Endothelial cell of umbilical vein (primary cell): ENCODE measurements at regions of chr1 and their contacts with region 1.

Region 1: GRCh38 chr1:81549604-81550127 is 251.1 kb upstream of the ADGRL2 start:
- DNase-seq: peak; percentile 77
- H3K4me3 ChIP-seq: no peak overlapping the region
- H3K27ac ChIP-seq: no peak overlapping the region
- H3K4me1 ChIP-seq: no peaks in the 10 kb centered on the region
- H3K27me3 ChIP-seq: no peaks in the 10 kb centered on the region
- CTCF ChIP-seq: peak; percentile 31 to 41
- POLR2A ChIP-seq: no peak

Region 2: DNA sequence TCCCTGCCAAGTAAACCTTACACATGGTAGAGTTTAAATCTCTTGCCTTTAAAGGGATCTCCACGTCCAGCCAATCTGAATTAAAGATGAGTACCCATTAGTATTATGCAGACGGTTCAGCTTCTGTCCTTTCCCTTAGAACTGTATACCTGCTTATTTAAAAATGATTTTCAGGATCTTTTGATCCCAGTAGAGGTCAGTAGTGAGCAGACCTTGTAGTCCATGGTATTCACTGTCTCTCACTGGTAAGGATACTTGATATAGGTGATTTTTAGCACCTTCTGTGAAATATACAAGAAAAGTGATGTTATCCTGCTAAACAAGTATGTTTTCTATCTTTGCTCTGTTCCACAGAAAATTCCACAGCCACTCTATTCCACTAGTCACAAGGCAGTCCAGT is 1331.6 kb before region 1 on chr1:
- CTCF ChIA-PET with region 1: interaction called, 4 read pairs
- POLR2A ChIA-PET with region 1: no interaction called
- dilution Hi-C with region 1: no loop called
- intact Hi-C with region 1: loop called (anchors 5 kb)
- DNase-seq: peak; percentile 51
- H3K4me3 ChIP-seq: no peak overlapping the region
- H3K27ac ChIP-seq: no peak overlapping the region
- H3K4me1 ChIP-seq: no peaks in the 10 kb centered on the region
- H3K27me3 ChIP-seq: no peaks in the 10 kb centered on the region
- CTCF ChIP-seq: peak; percentile 30 to 43
- POLR2A ChIP-seq: no peak

Region 3: GRCh38 chr1:80910426-80910825 is 639.2 kb before region 1 on chr1:
- CTCF ChIA-PET with region 1: no interaction called
- POLR2A ChIA-PET with region 1: no interaction called
- dilution Hi-C with region 1: no loop called
- intact Hi-C with region 1: no loop called
- DNase-seq: no peak
- H3K4me3 ChIP-seq: no peak overlapping the region
- H3K27ac ChIP-seq: no peak overlapping the region
- H3K4me1 ChIP-seq: no peaks in the 10 kb centered on the region
- H3K27me3 ChIP-seq: no peaks in the 10 kb centered on the region
- CTCF ChIP-seq: no peak
- POLR2A ChIP-seq: no peak

Region 4: GRCh38 chr1:81414488-81415015 is 135.1 kb before region 1 on chr1:
- CTCF ChIA-PET with region 1: interaction called, 7 read pairs
- POLR2A ChIA-PET with region 1: no interaction called
- dilution Hi-C with region 1: no loop called
- intact Hi-C with region 1: loop called (anchors 5 kb)
- DNase-seq: peak; percentile 66
- H3K4me3 ChIP-seq: no peak overlapping the region
- H3K27ac ChIP-seq: no peak overlapping the region
- H3K4me1 ChIP-seq: peaks cover 8% of the 10 kb centered on the region
- H3K27me3 ChIP-seq: no peaks in the 10 kb centered on the region
- CTCF ChIP-seq: peak; percentile 80
- POLR2A ChIP-seq: no peak

Region 5: GRCh38 chr1:81670286-81670685 is 120.6 kb after region 1 on chr1:
- CTCF ChIA-PET with region 1: interaction called, 6 read pairs
- POLR2A ChIA-PET with region 1: no interaction called
- dilution Hi-C with region 1: no loop called
- intact Hi-C with region 1: loop called (anchors 1 kb)
- DNase-seq: peak; percentile 98
- H3K4me3 ChIP-seq: no peak overlapping the region
- H3K27ac ChIP-seq: no peak overlapping the region
- H3K4me1 ChIP-seq: peaks cover 8% of the 10 kb centered on the region
- H3K27me3 ChIP-seq: no peaks in the 10 kb centered on the region
- CTCF ChIP-seq: no peak
- POLR2A ChIP-seq: no peak

Region 6: DNA sequence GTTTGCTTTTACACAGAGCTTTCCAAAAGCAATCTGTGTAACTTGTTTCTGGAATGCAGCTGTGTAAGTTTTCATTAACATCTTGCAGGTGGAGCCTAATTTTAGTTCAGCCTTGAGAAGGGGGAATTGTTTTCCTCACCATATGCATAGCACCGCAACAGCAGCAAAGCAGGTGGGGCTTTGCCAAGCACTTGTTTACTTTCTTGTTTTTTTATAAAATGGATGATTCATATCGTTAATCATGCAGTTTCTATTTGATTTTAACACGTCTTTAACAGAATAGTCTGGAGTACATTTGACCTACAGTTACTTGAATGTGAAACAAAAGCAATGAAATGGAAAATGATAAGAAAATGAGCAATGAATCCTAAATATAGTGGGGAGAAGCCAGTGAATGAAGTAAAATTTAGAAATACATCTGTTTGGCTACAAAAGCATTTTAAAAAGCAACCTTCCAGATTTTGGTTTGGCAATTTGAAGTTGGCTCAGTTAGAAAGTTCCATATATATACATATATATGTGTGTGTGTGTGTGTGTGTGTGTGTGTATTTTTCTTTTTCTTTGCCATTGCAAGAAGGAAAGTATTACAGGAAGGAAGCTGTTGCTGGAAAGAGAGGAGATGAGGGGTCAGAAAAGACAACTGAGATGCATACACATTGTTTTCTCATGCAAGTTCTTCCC is 132.1 kb after region 1 on chr1:
- CTCF ChIA-PET with region 1: interaction called, 6 read pairs
- POLR2A ChIA-PET with region 1: no interaction called
- dilution Hi-C with region 1: no loop called
- intact Hi-C with region 1: loop called (anchors 1 kb)
- DNase-seq: peak; percentile 92
- H3K4me3 ChIP-seq: peak overlapping the region in 1 of 3 experiments; percentile 34
- H3K27ac ChIP-seq: peak overlapping the region; percentile 50
- H3K4me1 ChIP-seq: peaks cover 24% of the 10 kb centered on the region
- H3K27me3 ChIP-seq: no peaks in the 10 kb centered on the region
- CTCF ChIP-seq: no peak
- POLR2A ChIP-seq: no peak

Region 7: DNA sequence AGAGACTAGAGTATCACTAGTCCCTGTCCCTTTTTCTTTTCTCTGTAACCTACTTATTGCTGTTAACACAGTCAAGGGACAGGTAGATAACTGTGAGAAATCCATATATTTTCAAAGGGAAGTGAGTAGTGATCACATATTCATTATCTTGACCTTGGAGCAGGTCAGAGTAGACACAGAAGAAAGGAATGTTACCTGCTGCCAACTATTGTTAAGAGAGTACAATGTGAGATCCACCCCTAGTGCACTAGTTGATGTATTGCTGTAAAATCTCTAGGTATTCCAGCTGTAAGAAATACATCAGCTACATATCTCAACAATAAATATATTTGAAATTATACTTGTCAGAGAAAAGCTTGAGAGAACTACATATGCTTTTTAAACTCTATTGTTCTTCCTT is 182.3 kb after region 1 on chr1:
- CTCF ChIA-PET with region 1: interaction called, 17 read pairs
- POLR2A ChIA-PET with region 1: no interaction called
- dilution Hi-C with region 1: no loop called
- intact Hi-C with region 1: no loop called
- DNase-seq: peak; percentile 70
- H3K4me3 ChIP-seq: no peak overlapping the region
- H3K27ac ChIP-seq: peak overlapping the region; percentile 46
- H3K4me1 ChIP-seq: peaks cover 13% of the 10 kb centered on the region
- H3K27me3 ChIP-seq: no peaks in the 10 kb centered on the region
- CTCF ChIP-seq: no peak
- POLR2A ChIP-seq: no peak

Region 8: DNA sequence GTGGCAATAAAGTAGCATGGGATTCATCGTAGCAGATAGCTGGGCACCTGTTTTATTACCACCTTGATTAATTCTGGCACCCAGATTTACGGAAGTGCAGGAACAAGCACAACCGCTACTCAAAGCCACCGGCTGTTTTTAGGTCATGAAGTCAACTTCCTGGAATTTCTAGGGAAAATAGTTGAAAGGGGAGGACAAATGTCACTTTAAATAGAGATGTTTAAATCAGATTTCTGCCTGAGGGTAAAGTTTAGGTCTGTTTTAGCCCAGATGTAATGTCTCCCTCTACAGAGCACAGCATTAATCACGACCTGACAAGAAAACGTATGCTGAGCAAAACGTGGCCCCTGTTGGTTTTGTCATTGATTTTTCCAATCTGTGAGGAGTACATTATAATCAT is 259.1 kb after region 1 on chr1:
- CTCF ChIA-PET with region 1: interaction called, 95 read pairs
- POLR2A ChIA-PET with region 1: no interaction called
- dilution Hi-C with region 1: no loop called
- intact Hi-C with region 1: no loop called
- DNase-seq: no peak
- H3K4me3 ChIP-seq: no peak overlapping the region
- H3K27ac ChIP-seq: no peak overlapping the region
- H3K4me1 ChIP-seq: peaks cover 26% of the 10 kb centered on the region
- H3K27me3 ChIP-seq: no peaks in the 10 kb centered on the region
- CTCF ChIP-seq: no peak
- POLR2A ChIP-seq: no peak

Region 9: DNA sequence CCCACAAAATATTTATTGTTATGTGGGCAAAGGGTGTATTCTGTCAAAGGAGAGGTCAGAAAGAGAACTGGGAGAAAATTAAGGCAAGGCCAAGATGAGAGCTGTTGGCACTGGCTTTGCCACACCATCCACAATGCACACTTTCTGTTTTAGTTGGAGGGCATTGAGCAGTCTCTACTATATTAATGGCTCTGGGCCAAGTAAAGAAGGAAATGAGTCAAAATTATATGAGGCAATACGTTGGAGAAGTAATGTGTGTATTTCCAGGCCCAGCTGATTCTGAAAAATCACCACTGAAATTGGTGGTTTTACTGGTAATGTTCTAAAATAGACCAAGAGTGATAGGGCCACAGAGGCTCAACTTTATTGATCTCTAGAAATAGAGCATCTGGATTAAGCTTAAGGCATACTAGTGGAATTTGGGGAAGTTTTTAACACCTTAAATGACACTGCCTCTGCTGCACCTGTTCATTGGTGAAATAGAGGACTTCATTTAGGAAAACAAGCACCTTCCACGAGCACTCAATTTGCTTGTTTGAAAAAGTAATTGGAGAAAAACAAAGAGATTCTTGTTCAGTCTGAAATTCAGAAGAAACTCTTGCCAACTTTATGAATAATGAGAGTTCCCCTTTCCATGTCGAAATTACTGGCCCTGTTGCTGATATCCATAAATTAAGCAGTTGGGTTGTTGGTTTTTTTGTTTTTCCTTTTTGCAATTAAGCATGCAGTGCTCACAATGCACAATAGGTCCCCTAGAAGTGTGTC is 675.9 kb after region 1 on chr1:
- CTCF ChIA-PET with region 1: no interaction called
- POLR2A ChIA-PET with region 1: no interaction called
- dilution Hi-C with region 1: no loop called
- intact Hi-C with region 1: no loop called
- DNase-seq: peak; percentile 78
- H3K4me3 ChIP-seq: no peak overlapping the region
- H3K27ac ChIP-seq: no peak overlapping the region
- H3K4me1 ChIP-seq: peaks cover 7% of the 10 kb centered on the region
- H3K27me3 ChIP-seq: no peaks in the 10 kb centered on the region
- CTCF ChIP-seq: no peak
- POLR2A ChIP-seq: no peak